GM10248 (cell line): ENCODE measurements at regions of chr1 and their contacts with region 1.

Region 1: GRCh38 chr1:44835738-44836675 is 7.0 kb downstream of the PTCH2 start:
- DNase-seq: peak; percentile 88
- CTCF ChIP-seq: peak; percentile 84

Region 2: DNA sequence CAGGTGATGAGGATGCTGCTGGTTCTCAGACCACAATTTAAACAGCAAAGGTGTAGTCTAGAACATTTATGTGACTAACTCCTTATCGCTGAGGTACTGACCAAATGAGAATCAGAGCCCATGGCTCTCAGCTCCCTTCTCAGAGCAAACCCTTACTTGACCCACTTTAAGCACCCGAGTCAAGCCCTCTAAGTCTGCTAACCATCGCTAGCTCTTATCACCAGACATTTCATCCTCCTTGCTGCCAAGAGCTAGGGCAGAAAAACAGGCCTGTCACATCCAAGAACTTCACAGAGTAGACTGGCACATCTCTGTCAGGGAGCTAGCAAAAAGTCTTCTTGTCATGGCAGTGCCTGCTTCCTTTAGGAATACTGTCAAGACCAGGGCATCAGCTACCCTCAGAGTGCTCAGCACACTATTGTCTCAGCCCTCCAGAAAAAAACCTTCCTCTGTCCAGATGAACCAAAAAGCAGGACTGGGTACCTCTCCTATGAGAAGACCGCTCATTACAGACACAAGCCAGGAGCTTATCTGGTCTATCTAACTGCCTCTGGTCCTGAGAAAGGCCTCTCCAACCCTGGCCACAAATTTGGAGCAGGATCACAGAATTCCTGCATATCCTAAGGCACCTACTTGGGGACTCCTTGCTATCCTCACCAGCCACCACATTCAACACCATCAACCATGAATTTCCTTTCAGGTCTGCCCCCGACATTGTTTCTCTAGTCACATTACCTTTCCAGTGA is 507.2 kb before region 1 on chr1:
- CTCF ChIA-PET with region 1: no interaction called
- POLR2A ChIA-PET with region 1: no interaction called
- DNase-seq: no peak
- CTCF ChIP-seq: no peak

Region 3: GRCh38 chr1:44846985-44847384 is 11.0 kb after region 1 on chr1:
- CTCF ChIA-PET with region 1: interaction called, 13 read pairs
- POLR2A ChIA-PET with region 1: no interaction called
- DNase-seq: no peak
- CTCF ChIP-seq: no peak